ENCODE measurements at regions of chr1 and their contacts with region 1.

Region 1: DNA sequence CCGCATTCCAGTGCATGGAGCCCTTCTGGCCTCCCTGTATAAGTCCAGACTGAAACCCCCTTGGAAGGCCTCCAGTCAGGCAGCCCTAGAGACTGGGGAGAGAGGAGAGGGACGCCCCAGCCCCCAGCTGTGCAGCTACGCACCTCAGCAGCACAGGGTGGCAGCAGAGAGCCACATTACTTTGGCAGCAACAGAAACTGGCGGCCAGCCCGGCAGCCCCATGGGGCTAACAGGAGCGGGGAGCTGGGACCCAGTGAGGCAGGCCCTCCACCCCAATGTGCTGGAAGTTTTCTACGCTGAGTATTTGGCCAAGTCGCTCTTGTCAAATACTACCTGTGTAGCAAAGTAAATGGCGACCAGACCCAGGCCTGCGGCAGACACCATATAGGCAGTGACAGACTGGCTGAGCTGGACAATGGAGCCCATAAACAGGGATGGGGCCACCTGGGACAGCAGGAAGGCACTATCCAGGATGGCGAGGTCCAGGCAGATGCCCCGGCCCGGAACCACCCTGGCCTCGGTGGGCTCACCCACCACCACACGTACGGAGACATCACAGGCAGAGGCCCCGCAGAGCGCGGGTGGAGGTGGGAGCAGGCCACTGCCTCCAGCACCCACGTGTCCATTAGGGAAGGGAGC is 21.2 kb downstream of the SLC45A3 start:
- DNase-seq: peak; percentile 81
- H3K4me3 ChIP-seq: no peak overlapping the region
- H3K27ac ChIP-seq: no peak overlapping the region
- H3K4me1 ChIP-seq: peaks cover 0 to 12% (median 5%) of the 10 kb centered on the region in 4 donors
- H3K27me3 ChIP-seq: no peaks in the 10 kb centered on the region
- CTCF ChIP-seq: peak; percentile 79 to 93 (median 85)
- EP300 ChIP-seq: no peak
- POLR2A ChIP-seq: no peak

Region 2: DNA sequence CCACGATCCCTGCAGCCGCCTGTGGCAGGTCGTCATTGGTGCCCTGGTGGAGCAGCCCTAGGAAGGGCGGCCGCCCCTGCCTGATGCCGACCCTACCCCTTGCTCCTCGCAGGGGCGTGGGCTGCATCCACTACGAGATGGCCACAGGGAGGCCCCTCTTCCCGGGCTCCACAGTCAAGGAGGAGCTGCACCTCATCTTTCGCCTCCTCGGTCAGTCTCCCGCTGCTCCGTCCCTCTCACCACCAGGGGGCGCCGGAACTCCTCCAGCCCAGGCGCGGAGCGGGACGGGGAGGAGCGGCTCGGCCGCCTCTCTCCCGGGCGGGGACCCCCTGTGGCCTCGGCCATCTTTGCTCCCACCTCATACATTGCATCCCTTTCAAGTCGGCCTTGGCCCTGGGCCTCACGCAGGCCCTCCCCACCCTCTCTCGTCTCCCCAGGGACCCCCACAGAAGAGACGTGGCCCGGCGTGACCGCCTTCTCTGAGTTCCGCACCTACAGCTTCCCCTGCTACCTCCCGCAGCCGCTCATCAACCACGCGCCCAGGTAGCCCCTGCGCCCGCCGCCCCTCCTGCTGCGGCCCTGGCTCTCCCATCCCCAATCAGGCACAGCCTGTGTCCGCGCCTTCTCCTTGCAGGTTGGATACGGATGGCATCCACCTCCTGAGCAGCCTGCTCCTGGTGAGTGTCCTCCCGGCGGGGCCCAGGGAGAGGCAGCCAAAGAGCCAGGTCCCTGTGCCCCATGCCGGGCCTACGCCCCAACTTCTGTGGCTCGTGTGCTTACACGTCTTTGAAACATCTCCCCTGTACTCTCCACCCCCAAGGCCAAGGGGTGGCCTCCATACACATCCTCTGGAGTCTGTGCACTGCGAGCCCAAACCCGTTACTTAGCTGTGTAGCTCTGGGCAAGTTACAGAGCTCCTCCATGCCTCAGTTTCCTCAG is 129.9 kb before region 1 on chr1:
- in situ Hi-C with region 1: loop called in 1 of 4 experiments (anchors 10 kb)
- intact Hi-C with region 1: no loop called
- DNase-seq: peak; percentile 85
- H3K4me3 ChIP-seq: peak overlapping the region in 2 of 4 donors; percentile 15 to 30
- H3K27ac ChIP-seq: no peak overlapping the region
- H3K4me1 ChIP-seq: peaks cover 0 to 5% (median 2%) of the 10 kb centered on the region in 4 donors
- H3K27me3 ChIP-seq: no peaks in the 10 kb centered on the region
- CTCF ChIP-seq: peak; percentile 89 to 96 (median 95)
- EP300 ChIP-seq: no peak
- POLR2A ChIP-seq: no peak

Region 3: DNA sequence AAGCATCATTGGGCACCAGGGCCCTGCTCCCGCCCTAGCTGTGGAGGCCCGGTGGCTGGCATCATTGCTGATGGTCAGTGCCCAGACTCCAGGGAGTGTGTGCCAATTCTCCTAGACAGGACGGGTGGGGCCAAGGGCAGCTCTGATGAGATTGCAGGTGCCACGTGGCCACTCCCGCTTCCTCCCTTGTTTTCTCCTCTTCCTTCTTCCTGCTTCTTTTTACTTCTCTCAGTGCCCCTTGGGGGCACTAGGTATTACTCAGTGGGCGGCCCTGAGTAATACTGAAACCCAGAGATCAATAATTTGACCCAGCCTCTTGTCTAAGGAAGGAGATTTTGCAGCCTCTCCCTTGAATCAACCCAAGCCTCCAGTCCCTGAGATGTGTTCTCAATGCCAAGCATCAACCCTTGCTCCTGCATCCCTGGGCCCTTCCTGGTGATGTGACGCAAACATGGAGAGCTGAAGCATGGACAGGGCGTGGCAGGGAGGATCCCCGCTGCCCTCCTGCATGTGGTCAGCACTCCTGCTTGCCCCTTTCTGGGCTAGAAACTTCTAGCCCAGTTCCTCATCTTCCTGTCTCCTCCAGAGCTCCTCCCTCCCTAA is 122.2 kb before region 1 on chr1:
- in situ Hi-C with region 1: loop called in 1 of 4 experiments (anchors 5 kb)
- intact Hi-C with region 1: no loop called
- DNase-seq: peak; percentile 76
- H3K4me3 ChIP-seq: no peak overlapping the region
- H3K27ac ChIP-seq: no peak overlapping the region
- H3K4me1 ChIP-seq: peaks cover 0 to 7% (median 4%) of the 10 kb centered on the region in 4 donors
- H3K27me3 ChIP-seq: no peaks in the 10 kb centered on the region
- CTCF ChIP-seq: no peak
- EP300 ChIP-seq: no peak
- POLR2A ChIP-seq: no peak

Region 4: GRCh38 chr1:205591522-205592351 is 67.3 kb before region 1 on chr1:
- in situ Hi-C with region 1: loop called in 1 of 4 experiments (anchors 10 kb)
- intact Hi-C with region 1: loop called (anchors 2 kb)
- DNase-seq: peak; percentile 93
- H3K4me3 ChIP-seq: peak overlapping the region in 3 of 4 donors; percentile 23 to 56 (median 33)
- H3K27ac ChIP-seq: peak overlapping the region; percentile 70 to 77 (median 74)
- H3K4me1 ChIP-seq: peaks cover 3 to 39% (median 14%) of the 10 kb centered on the region in 4 donors
- H3K27me3 ChIP-seq: no peaks in the 10 kb centered on the region
- CTCF ChIP-seq: peak; percentile 95 to 99 (median 98)
- EP300 ChIP-seq: no peak
- POLR2A ChIP-seq: peak; percentile 32

Region 5: GRCh38 chr1:205711104-205712020 is 52.3 kb after region 1 on chr1:
- in situ Hi-C with region 1: loop called in 1 of 4 experiments (anchors 10 kb)
- intact Hi-C with region 1: no loop called
- DNase-seq: peak; percentile 70
- H3K4me3 ChIP-seq: no peak overlapping the region
- H3K27ac ChIP-seq: peak overlapping the region in 1 of 4 donors; percentile 16
- H3K4me1 ChIP-seq: peaks cover 0 to 33% (median 18%) of the 10 kb centered on the region in 4 donors
- H3K27me3 ChIP-seq: no peaks in the 10 kb centered on the region
- CTCF ChIP-seq: peak; percentile 85 to 91 (median 89)
- EP300 ChIP-seq: no peak
- POLR2A ChIP-seq: no peak

Region 6: DNA sequence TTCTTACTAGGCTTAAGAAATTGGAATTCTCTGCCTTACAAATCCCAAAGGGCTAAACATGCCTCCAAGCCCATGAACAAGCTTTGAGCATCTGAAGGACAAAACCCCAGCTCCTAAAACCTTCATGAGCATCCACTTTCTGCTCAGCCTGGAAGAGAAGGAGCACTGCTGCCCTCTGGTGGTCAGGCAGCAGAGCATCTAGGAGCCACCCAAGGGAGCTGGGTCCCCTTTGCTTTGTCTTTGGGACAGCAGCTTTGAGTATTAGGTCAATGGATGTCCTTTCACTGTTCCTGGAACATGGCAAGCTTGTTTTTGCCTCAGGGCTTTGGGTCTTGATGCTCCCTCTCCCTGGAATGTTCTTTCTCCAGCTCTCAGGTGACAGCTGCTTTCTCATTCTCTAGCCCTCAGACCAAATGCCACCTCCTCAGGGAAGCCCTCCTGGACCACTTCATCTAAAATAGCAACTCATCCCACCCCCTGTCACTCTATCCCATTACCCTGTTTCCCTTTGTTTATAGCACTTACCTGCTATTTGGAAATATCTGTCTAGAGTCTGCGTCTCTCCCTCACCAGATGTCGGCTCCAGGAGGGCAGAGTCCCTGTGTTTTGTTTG is 318.4 kb after region 1 on chr1:
- in situ Hi-C with region 1: no loop called
- intact Hi-C with region 1: loop called (anchors 2 kb)
- DNase-seq: peak; percentile 68
- H3K4me3 ChIP-seq: no peak overlapping the region
- H3K27ac ChIP-seq: no peak overlapping the region
- H3K4me1 ChIP-seq: no peaks in the 10 kb centered on the region
- H3K27me3 ChIP-seq: no peaks in the 10 kb centered on the region
- CTCF ChIP-seq: peak; percentile 91 to 96 (median 93)
- EP300 ChIP-seq: no peak
- POLR2A ChIP-seq: no peak

Measured in transverse colon (tissue), 4 donors.